ENCODE measurements at regions of chr1 and their contacts with region 1.

Region 1: DNA sequence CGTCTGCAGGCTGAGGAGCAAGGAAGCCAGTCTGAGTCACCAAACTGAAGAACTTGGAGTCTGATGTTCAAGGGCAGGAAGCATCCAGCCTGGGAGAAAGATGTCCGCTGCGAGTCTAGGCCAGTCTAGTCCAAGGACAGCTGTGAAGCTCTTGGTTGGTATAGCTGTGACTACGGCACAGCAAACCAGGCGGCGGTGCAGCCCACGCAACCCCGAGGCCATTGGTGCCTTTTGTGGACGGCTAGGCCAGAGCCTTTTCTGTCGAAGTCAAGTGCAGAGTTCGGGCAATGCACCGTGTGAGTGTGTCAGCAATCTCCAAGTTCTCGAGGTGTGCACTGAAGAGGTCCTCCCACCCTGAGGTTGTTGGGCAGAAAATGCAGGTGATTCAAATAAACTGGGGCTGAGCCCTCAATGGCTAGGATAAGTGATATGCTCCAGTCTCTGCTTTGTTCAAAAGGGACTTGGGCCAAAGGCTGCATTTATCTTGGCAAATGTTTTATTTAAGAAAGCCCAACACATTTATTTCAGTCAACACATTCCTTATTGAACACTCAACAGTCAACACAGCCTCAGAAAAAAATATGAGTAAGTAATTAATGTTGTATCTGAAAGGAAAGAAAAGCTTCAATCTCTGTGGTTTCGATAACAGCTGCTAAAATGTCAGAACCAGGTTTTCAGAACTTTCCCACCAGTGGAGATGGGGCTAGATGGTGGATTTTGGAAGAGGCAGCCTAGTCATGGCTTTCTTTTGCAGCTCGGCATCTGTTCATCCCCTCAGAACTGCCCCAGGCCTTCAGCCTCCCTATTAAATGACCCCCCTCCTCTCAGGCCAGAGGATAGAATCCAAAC is 78.1 kb upstream of the COX20 start:
- DNase-seq: no peak
- H3K4me3 ChIP-seq: no peak overlapping the region
- H3K27ac ChIP-seq: no peak overlapping the region
- H3K4me1 ChIP-seq: no peaks in the 10 kb centered on the region
- H3K27me3 ChIP-seq: no peaks in the 10 kb centered on the region
- CTCF ChIP-seq: no peak

Region 2: GRCh38 chr1:244732851-244733450 is 24.4 kb before region 1 on chr1:
- CTCF ChIA-PET with region 1: interaction called, 13 read pairs
- POLR2A ChIA-PET with region 1: no interaction called
- intact Hi-C with region 1: no loop called
- DNase-seq: no peak
- H3K4me3 ChIP-seq: no peak overlapping the region
- H3K27ac ChIP-seq: no peak overlapping the region
- H3K4me1 ChIP-seq: no peaks in the 10 kb centered on the region
- H3K27me3 ChIP-seq: no peaks in the 10 kb centered on the region
- CTCF ChIP-seq: no peak

Region 3: GRCh38 chr1:244740079-244740478 is 17.2 kb before region 1 on chr1:
- CTCF ChIA-PET with region 1: no interaction called
- POLR2A ChIA-PET with region 1: interaction called, 12 read pairs
- intact Hi-C with region 1: no loop called
- DNase-seq: peak; percentile 65 to 96
- H3K4me3 ChIP-seq: peak overlapping the region; percentile 51; the same call in 1 of the 2 replicates
- H3K27ac ChIP-seq: peak overlapping the region; percentile 85
- H3K4me1 ChIP-seq: peaks cover 14% of the 10 kb centered on the region
- H3K27me3 ChIP-seq: no peaks in the 10 kb centered on the region
- CTCF ChIP-seq: no peak